Activated CD8-positive, alpha-beta T cell treated with anti-CD3 and anti-CD28 coated beads, Interleukin-2, amount 10 ng/mL, durations not matched to agents 7 days and 5 days (primary cell): ENCODE measurements at regions of chr16 and their contacts with region 1.

Region 1: GRCh38 chr16:27461483-27462171 is 59.7 kb downstream of the IL21R start:
- DNase-seq: no peak
- ATAC-seq: no peak
- H3K4me3 Mint-ChIP-seq: no peak overlapping the region
- H3K27ac Mint-ChIP-seq: peak overlapping the region; percentile 34
- H3K4me1 Mint-ChIP-seq: peaks cover 61% of the 10 kb centered on the region
- H3K27me3 Mint-ChIP-seq: no peaks in the 10 kb centered on the region

Region 2: DNA sequence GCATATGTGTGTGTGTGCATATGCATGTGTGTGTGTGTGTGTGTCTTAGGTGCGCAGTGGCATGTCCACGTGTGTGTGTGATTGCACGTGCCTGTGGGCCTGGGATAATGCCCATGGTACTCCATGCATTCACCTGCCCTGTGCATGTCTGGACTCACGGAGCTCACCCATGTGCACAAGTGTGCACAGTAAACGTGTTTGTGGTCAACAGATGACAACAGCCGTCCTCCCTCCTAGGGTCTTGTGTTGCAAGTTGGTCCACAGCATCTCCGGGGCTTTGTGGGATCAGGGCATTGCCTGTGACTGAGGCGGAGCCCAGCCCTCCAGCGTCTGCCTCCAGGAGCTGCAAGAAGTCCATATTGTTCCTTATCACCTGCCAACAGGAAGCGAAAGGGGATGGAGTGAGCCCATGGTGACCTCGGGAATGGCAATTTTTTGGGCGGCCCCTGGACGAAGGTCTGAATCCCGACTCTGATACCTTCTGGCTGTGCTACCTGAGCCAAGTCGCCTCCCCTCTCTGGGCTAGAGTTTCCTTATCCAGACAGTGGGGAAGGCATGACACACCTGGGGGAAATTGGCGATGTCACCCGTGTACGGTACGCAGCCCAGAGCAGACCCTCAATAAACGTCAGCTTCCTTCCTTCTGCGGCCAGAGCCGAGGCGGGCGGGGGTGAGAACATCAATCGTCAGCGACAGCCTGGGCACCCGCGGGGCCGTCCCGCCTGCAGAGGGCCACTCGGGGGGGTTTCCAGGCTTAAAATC is 12.0 kb before region 1 on chr16:
- CTCF ChIA-PET with region 1: interaction called, 4 read pairs
- POLR2A ChIA-PET with region 1: interaction called, 21 read pairs
- DNase-seq: peak; percentile 88
- ATAC-seq: peak; percentile 71
- H3K4me3 Mint-ChIP-seq: peak overlapping the region; percentile 72
- H3K27ac Mint-ChIP-seq: peak overlapping the region; percentile 95
- H3K4me1 Mint-ChIP-seq: peaks cover 71% of the 10 kb centered on the region
- H3K27me3 Mint-ChIP-seq: no peaks in the 10 kb centered on the region

Region 3: GRCh38 chr16:27520982-27521673 is 59.5 kb after region 1 on chr16:
- CTCF ChIA-PET with region 1: no interaction called
- POLR2A ChIA-PET with region 1: no interaction called
- DNase-seq: no peak
- ATAC-seq: no peak
- H3K4me3 Mint-ChIP-seq: no peak overlapping the region
- H3K27ac Mint-ChIP-seq: no peak overlapping the region
- H3K4me1 Mint-ChIP-seq: no peaks in the 10 kb centered on the region
- H3K27me3 Mint-ChIP-seq: no peaks in the 10 kb centered on the region

Region 4: GRCh38 chr16:27556471-27556870 is 94.8 kb after region 1 on chr16:
- CTCF ChIA-PET with region 1: no interaction called
- POLR2A ChIA-PET with region 1: no interaction called
- DNase-seq: no peak
- ATAC-seq: no peak
- H3K4me3 Mint-ChIP-seq: no peak overlapping the region
- H3K27ac Mint-ChIP-seq: no peak overlapping the region
- H3K4me1 Mint-ChIP-seq: no peaks in the 10 kb centered on the region
- H3K27me3 Mint-ChIP-seq: no peaks in the 10 kb centered on the region